Heart left ventricle (tissue), 16 donors: ENCODE measurements at regions of chr16 and their contacts with region 1.

Region 1: GRCh38 chr16:66751303-66751991 is at the start of gene DYNC1LI2:
- DNase-seq: peak; percentile 86 to 91 (median 87)
- ATAC-seq: peak; percentile 79 to 95 (median 92)
- H3K4me3 ChIP-seq: peak within 1 kb of the TSS; percentile 63 to 100 (median 96)
- H3K27ac ChIP-seq: peak within 1 kb of the TSS; percentile 88 to 100 (median 95)
- H3K4me1 ChIP-seq: peaks cover 0 to 55% (median 21%) of the 10 kb centered on the region in 12 donors
- H3K27me3 ChIP-seq: no peaks in the 10 kb centered on the region
- CTCF ChIP-seq: peak; percentile 63 to 98 (median 88)
- POLR2A ChIP-seq: peak in 1 of 2 donors; percentile 38
- total RNA-seq, gene DYNC1LI2: 58.3 to 117 (median 88.6) TPM

Region 2: DNA sequence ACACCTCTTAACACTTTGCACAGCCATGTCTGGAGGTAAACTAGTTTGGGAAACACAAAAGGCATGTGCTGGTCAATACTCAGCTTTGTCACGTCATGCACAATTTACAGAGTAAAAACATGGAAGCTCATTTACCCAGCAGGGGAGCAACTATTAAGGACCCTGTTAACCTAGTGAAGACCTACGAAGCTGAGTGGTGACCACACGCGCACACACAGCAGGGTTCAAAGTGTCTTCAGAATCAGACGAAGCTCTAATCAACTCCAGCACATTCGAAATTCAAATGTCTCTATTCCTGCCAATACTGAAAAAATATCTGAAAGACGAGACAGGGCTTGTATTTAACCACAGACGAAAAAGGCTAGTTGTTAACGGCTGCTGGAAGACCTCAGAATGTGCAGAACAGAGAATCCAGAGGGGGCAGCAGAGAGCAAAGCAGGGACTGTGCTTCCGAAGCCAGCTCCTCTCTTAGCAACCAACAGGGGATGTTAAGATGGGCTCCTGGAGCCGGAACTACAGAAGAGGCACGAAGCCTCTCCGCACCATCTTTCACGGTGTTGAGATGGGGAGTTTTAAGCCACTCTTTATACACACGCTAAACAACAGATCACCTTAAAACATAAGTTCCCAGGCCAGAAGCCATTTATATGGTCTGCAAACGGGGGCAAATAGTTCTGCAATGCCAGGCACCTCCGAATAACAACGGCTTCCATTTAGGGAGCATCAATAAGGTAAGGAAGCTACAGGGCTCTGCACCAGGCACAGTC is 100.6 kb before region 1 on chr16:
- intact Hi-C with region 1: loop called in 1 of 10 experiments (anchors 10 kb)
- DNase-seq: peak; percentile 71 to 82 (median 76)
- ATAC-seq: peak; percentile 71 to 96 (median 91)
- H3K4me3 ChIP-seq: peak overlapping the region in 6 of 12 donors; percentile 3 to 41 (median 33)
- H3K27ac ChIP-seq: no peak overlapping the region
- H3K4me1 ChIP-seq: peaks cover 0 to 36% (median 7%) of the 10 kb centered on the region in 12 donors
- H3K27me3 ChIP-seq: no peaks in the 10 kb centered on the region
- CTCF ChIP-seq: peak; percentile 82 to 97 (median 93)
- POLR2A ChIP-seq: no peak

Region 3: GRCh38 chr16:66660422-66661209 is 90.8 kb before region 1 on chr16:
- intact Hi-C with region 1: loop called in 2 of 10 experiments (anchors 5 to 10 kb)
- DNase-seq: peak; percentile 71 to 82 (median 75)
- ATAC-seq: peak; percentile 93 to 97 (median 97)
- H3K4me3 ChIP-seq: no peak overlapping the region
- H3K27ac ChIP-seq: peak overlapping the region; percentile 0 to 78 (median 62)
- H3K4me1 ChIP-seq: peaks cover 3 to 32% (median 25%) of the 10 kb centered on the region in 12 donors
- H3K27me3 ChIP-seq: no peaks in the 10 kb centered on the region
- CTCF ChIP-seq: peak in 7 of 12 donors; percentile 5 to 52 (median 33)
- POLR2A ChIP-seq: no peak

Region 4: GRCh38 chr16:66696669-66697630 is 54.5 kb before region 1 on chr16 and contains the start of gene CMTM4:
- intact Hi-C with region 1: loop called in 2 of 10 experiments (anchors 5 to 10 kb)
- DNase-seq: peak; percentile 88 to 93 (median 90)
- ATAC-seq: peak; percentile 90 to 99 (median 97)
- H3K4me3 ChIP-seq: peak within 1 kb of the TSS; percentile 61 to 94 (median 78)
- H3K27ac ChIP-seq: peak within 1 kb of the TSS in 8 of 12 donors; percentile 32 to 77 (median 66)
- H3K4me1 ChIP-seq: peaks cover 0 to 30% (median 12%) of the 10 kb centered on the region in 12 donors
- H3K27me3 ChIP-seq: no peaks in the 10 kb centered on the region
- CTCF ChIP-seq: peak in 6 of 12 donors; percentile 15 to 57 (median 34)
- POLR2A ChIP-seq: peak in 1 of 2 donors; percentile 32
- total RNA-seq, gene CMTM4: 8.1 to 22.5 (median 12.2) TPM

Region 5: GRCh38 chr16:66728117-66728787 is 23.2 kb before region 1 on chr16:
- intact Hi-C with region 1: loop called in 2 of 10 experiments (anchors 1 kb)
- DNase-seq: peak in 4 of 5 donors; percentile 30 to 47 (median 40)
- ATAC-seq: peak; percentile 75 to 88 (median 83)
- H3K4me3 ChIP-seq: no peak overlapping the region
- H3K27ac ChIP-seq: no peak overlapping the region
- H3K4me1 ChIP-seq: peaks cover 0 to 15% (median 4%) of the 10 kb centered on the region in 12 donors
- H3K27me3 ChIP-seq: no peaks in the 10 kb centered on the region
- CTCF ChIP-seq: peak; percentile 46 to 80 (median 70)
- POLR2A ChIP-seq: no peak

Region 6: GRCh38 chr16:66740010-66740409 is 11.4 kb before region 1 on chr16:
- intact Hi-C with region 1: loop called in 3 of 10 experiments (anchors 1 kb)
- DNase-seq: no peak
- ATAC-seq: no peak
- H3K4me3 ChIP-seq: no peak overlapping the region
- H3K27ac ChIP-seq: peak overlapping the region; percentile 42 to 94 (median 86)
- H3K4me1 ChIP-seq: peaks cover 13 to 64% (median 39%) of the 10 kb centered on the region in 12 donors
- H3K27me3 ChIP-seq: no peaks in the 10 kb centered on the region
- CTCF ChIP-seq: peak; percentile 35 to 67 (median 50)
- POLR2A ChIP-seq: no peak